Activated CD4-positive, alpha-beta T cell treated with anti-CD3 and anti-CD28 coated beads for 36 hours (primary cell): ENCODE measurements at regions of chr11 and their contacts with region 1.

Region 1: GRCh38 chr11:47607380-47607779 is 13.2 kb upstream of the C1QTNF4 start:
- DNase-seq: no peak
- ATAC-seq: no peak
- H3K4me3 Mint-ChIP-seq: no peak overlapping the region
- H3K27ac Mint-ChIP-seq: no peak overlapping the region
- H3K4me1 Mint-ChIP-seq: no peaks in the 10 kb centered on the region
- H3K27me3 Mint-ChIP-seq: no peaks in the 10 kb centered on the region

Region 2: GRCh38 chr11:46611526-46612304 is 995.7 kb before region 1 on chr11:
- CTCF ChIA-PET with region 1: no interaction called
- POLR2A ChIA-PET with region 1: interaction called, 10 read pairs
- intact Hi-C with region 1: no loop called
- DNase-seq: no peak
- ATAC-seq: no peak
- H3K4me3 Mint-ChIP-seq: no peak overlapping the region
- H3K27ac Mint-ChIP-seq: no peak overlapping the region
- H3K4me1 Mint-ChIP-seq: peaks cover 12% of the 10 kb centered on the region
- H3K27me3 Mint-ChIP-seq: no peaks in the 10 kb centered on the region